IMR-90 (cell line): ENCODE measurements at regions of chr21 and their contacts with region 1.

Region 1: GRCh38 chr21:38355992-38356797 is 99.4 kb downstream of the KCNJ15 start:
- DNase-seq: peak; percentile 61
- ATAC-seq: peak; percentile 79
- H3K4me3 ChIP-seq: no peak overlapping the region
- H3K27ac ChIP-seq: no peak overlapping the region
- H3K4me1 ChIP-seq: peaks cover 11% of the 10 kb centered on the region
- H3K27me3 ChIP-seq: peaks cover 16% of the 10 kb centered on the region
- CTCF ChIP-seq: peak; percentile 99
- POLR2A ChIP-seq: peak; percentile 55; the same call in 1 of the 2 replicates
- RAD21 ChIP-seq: peak; percentile 100

Region 2: DNA sequence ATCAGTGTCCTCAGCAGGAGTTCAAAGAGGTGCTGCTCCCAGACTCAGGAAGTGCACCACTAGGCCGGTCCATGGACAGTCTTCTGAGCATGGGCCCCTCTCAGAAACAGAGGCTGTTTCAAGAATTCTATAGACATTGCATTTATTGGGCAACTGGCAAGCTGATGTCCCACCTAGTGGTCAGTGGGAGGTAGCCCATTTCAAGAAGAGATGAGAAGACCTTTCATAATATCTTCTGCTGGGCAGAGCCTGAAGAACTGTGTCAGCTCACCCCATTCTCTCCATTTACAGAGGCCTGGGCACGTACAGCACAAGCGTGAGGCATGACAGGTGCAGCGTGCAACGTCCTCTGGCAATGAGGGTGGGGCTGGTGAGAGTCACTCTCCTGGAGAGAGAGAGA is 773.6 kb before region 1 on chr21:
- CTCF ChIA-PET with region 1: no interaction called
- POLR2A ChIA-PET with region 1: no interaction called
- dilution Hi-C with region 1: no loop called
- in situ Hi-C with region 1: no loop called
- intact Hi-C with region 1: loop called (anchors 5 kb)
- DNase-seq: peak; percentile 77
- ATAC-seq: peak; percentile 98
- H3K4me3 ChIP-seq: no peak overlapping the region
- H3K27ac ChIP-seq: no peak overlapping the region
- H3K4me1 ChIP-seq: no peaks in the 10 kb centered on the region
- H3K27me3 ChIP-seq: peaks cover 2% of the 10 kb centered on the region; the same call in 1 of the 2 replicates
- CTCF ChIP-seq: peak; percentile 85
- POLR2A ChIP-seq: 0 out of 2 replicates have a peak, but pooled peaks have one; percentile 31
- RAD21 ChIP-seq: peak; percentile 94

Region 3: DNA sequence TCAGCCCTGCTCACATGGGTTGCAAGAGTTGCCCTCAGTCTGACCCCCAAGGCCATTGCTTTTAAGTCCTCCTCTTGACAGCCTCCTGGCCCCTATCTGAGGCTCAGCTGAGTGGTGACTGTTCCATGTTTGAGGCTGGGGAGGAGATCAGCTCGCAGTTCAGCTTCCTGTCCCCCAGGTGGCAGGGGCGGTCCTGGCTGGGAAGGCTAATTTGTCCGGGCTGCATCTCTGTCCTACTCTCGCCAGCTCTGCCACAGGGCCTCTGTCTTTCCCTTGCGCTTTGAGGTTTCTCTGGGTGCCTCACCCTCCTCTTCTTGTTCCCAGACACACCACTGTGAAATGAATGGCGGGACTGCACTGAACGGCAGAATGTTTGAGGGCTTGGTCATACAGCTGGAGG is 597.2 kb before region 1 on chr21:
- CTCF ChIA-PET with region 1: no interaction called
- POLR2A ChIA-PET with region 1: no interaction called
- dilution Hi-C with region 1: no loop called
- in situ Hi-C with region 1: no loop called
- intact Hi-C with region 1: loop called (anchors 1 kb)
- DNase-seq: peak; percentile 62
- ATAC-seq: peak; percentile 94
- H3K4me3 ChIP-seq: no peak overlapping the region
- H3K27ac ChIP-seq: no peak overlapping the region
- H3K4me1 ChIP-seq: no peaks in the 10 kb centered on the region
- H3K27me3 ChIP-seq: peaks cover 27% of the 10 kb centered on the region
- CTCF ChIP-seq: peak; percentile 89
- POLR2A ChIP-seq: no peak
- RAD21 ChIP-seq: peak; percentile 98

Region 4: GRCh38 chr21:38159355-38159754 is 196.8 kb before region 1 on chr21:
- CTCF ChIA-PET with region 1: interaction called, 8 read pairs
- POLR2A ChIA-PET with region 1: no interaction called
- dilution Hi-C with region 1: no loop called
- in situ Hi-C with region 1: loop called (anchors 5 kb)
- intact Hi-C with region 1: loop called (anchors 1 kb)
- DNase-seq: peak; percentile 84
- ATAC-seq: peak; percentile 95
- H3K4me3 ChIP-seq: no peak overlapping the region
- H3K27ac ChIP-seq: no peak overlapping the region
- H3K4me1 ChIP-seq: no peaks in the 10 kb centered on the region
- H3K27me3 ChIP-seq: peaks cover 14% of the 10 kb centered on the region
- CTCF ChIP-seq: peak; percentile 84
- POLR2A ChIP-seq: no peak
- RAD21 ChIP-seq: peak; percentile 82

Region 5: DNA sequence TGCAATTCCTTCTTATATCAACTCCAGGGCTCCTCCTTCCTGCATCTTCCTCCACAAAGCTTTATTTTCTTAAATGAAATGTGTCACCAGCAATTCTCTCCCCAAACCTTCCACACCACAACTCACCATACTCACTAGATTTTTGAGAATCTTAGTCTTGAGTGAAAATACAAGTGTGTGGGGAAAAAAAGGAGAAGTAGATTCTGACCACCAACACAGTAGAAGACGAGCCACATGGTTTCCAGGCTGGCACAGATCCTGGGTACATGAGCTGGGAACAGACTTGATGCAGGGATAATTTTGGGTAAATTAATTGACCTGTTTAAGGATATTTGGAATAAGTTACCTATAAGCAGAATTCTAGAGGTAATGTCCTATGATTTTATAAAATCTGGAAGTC is 172.2 kb before region 1 on chr21:
- CTCF ChIA-PET with region 1: no interaction called
- POLR2A ChIA-PET with region 1: no interaction called
- dilution Hi-C with region 1: no loop called
- in situ Hi-C with region 1: no loop called
- intact Hi-C with region 1: no loop called
- DNase-seq: no peak
- ATAC-seq: no peak
- H3K4me3 ChIP-seq: no peak overlapping the region
- H3K27ac ChIP-seq: no peak overlapping the region
- H3K4me1 ChIP-seq: peaks cover 2% of the 10 kb centered on the region
- H3K27me3 ChIP-seq: peaks cover 2% of the 10 kb centered on the region; the same call in 1 of the 2 replicates
- CTCF ChIP-seq: no peak
- POLR2A ChIP-seq: no peak
- RAD21 ChIP-seq: no peak

Region 6: GRCh38 chr21:38219049-38219628 is 137.1 kb before region 1 on chr21:
- CTCF ChIA-PET with region 1: interaction called, 30 read pairs
- POLR2A ChIA-PET with region 1: interaction called, 4 read pairs
- dilution Hi-C with region 1: loop called (anchors 25 kb)
- in situ Hi-C with region 1: loop called (anchors 5 kb)
- intact Hi-C with region 1: loop called (anchors 1 kb)
- DNase-seq: peak; percentile 79
- ATAC-seq: peak; percentile 98
- H3K4me3 ChIP-seq: no peak overlapping the region
- H3K27ac ChIP-seq: no peak overlapping the region
- H3K4me1 ChIP-seq: no peaks in the 10 kb centered on the region
- H3K27me3 ChIP-seq: no peaks in the 10 kb centered on the region
- CTCF ChIP-seq: peak; percentile 91
- POLR2A ChIP-seq: no peak
- RAD21 ChIP-seq: peak; percentile 95

Region 7: DNA sequence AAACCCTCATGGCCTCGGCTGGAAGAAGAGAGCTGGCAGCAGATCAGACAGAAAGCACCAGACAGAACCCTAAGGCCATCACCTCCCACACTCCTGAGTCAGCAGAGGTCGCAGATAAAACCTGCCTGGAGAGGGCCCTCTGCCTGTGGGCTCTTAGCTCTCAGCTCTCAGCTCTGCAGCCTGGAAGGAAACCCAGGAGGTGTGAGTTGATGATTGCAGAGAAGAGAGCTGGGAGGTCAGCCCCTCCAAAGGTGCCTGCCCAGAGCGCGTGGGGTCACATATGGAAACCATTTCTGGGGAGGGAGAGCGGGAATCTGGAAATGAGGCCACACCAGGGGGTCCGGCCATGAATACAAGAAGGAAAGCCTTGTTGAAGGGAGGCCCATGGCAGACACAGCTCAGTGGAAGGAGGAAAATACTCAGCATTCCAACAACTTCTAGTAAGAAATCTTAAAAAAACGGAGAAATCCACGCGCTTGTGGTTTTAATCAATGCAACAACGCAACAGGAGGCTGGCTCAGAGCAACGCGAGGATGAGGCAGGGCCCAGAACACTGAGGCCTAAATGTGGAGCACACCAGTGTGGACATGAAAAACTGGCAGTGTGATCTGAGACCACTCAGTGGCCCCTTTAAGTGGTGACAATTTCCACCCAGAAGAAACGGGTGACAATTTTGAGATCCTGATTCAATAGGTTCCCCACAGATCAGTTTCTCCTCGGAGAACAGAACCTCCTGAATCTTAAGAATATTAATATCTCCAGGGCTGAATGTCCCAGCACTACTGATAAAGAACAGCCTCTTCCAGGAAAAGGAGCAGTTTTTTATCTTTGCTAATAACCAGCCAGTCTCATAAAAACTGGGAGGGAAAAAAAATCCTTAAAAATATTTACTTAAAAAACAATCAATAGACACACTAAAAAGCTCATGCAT is 781.3 kb after region 1 on chr21:
- CTCF ChIA-PET with region 1: interaction called, 7 read pairs
- POLR2A ChIA-PET with region 1: no interaction called
- dilution Hi-C with region 1: no loop called
- in situ Hi-C with region 1: no loop called
- intact Hi-C with region 1: loop called (anchors 5 kb)
- DNase-seq: peak; percentile 24
- ATAC-seq: no peak
- H3K4me3 ChIP-seq: no peak overlapping the region
- H3K27ac ChIP-seq: no peak overlapping the region
- H3K4me1 ChIP-seq: peaks cover 7% of the 10 kb centered on the region; the same call in 1 of the 2 replicates
- H3K27me3 ChIP-seq: peaks cover 19% of the 10 kb centered on the region
- CTCF ChIP-seq: peak; percentile 16; the same call in 1 of the 2 replicates
- POLR2A ChIP-seq: no peak
- RAD21 ChIP-seq: no peak